IMR-90 (cell line): ENCODE measurements at regions of chr6 and their contacts with region 1.

Region 1: GRCh38 chr6:158518191-158519127 is 41.4 kb upstream of the TMEM181 start:
- DNase-seq: peak; percentile 69
- ATAC-seq: peak; percentile 96
- H3K4me3 ChIP-seq: peak overlapping the region; percentile 52
- H3K27ac ChIP-seq: no peak overlapping the region; the same call in 1 of the 2 replicates
- H3K4me1 ChIP-seq: no peaks in the 10 kb centered on the region
- H3K27me3 ChIP-seq: no peaks in the 10 kb centered on the region
- CTCF ChIP-seq: peak; percentile 59
- POLR2A ChIP-seq: no peak
- RAD21 ChIP-seq: peak; percentile 55

Region 2: DNA sequence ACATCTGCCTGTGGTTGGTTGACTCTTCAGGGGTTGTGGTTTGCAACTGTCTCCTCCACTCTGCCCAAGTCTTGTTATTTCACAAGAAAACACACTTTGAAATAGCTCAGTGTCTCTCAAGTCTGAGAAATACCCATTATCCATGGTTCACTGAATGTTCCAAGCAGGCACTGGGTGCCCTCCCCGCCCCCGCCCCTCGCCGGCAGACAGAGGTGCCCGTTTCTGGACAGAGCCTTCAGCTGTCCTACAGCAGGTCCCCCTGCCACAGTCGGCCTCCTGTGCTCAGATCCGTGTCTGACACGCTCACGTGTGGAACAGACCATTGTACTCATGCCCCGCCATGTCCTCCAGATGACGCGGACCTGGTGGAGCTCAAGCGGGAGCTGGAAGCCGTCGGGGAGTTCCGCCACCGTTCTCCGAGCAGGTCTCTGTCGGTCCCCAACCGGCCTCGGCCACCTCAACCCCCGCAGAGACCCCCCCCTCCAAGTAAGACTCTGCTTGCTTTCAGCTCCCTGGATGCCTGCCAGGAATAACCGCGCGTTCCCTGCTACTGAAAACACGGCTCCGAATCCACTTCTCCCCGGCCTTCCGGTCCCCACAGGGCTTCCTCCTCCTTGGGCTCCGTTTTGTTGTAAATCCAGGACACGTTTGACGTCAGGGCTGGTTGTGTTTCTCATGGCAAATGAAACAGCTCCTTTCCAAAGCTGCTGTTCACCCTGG is 431.8 kb before region 1 on chr6:
- CTCF ChIA-PET with region 1: no interaction called
- POLR2A ChIA-PET with region 1: no interaction called
- dilution Hi-C with region 1: no loop called
- in situ Hi-C with region 1: no loop called
- intact Hi-C with region 1: no loop called
- DNase-seq: peak; percentile 64
- ATAC-seq: peak; percentile 67; the same call in 1 of the 2 replicates
- H3K4me3 ChIP-seq: no peak overlapping the region
- H3K27ac ChIP-seq: no peak overlapping the region
- H3K4me1 ChIP-seq: peaks cover 8% of the 10 kb centered on the region
- H3K27me3 ChIP-seq: no peaks in the 10 kb centered on the region
- CTCF ChIP-seq: no peak
- POLR2A ChIP-seq: no peak
- RAD21 ChIP-seq: no peak

Region 3: GRCh38 chr6:158559895-158560835 is 41.7 kb after region 1 on chr6 and contains the start of gene TMEM181:
- CTCF ChIA-PET with region 1: no interaction called
- POLR2A ChIA-PET with region 1: no interaction called
- dilution Hi-C with region 1: no loop called
- in situ Hi-C with region 1: no loop called
- intact Hi-C with region 1: loop called (anchors 2 kb)
- DNase-seq: peak; percentile 80
- ATAC-seq: peak; percentile 74
- H3K4me3 ChIP-seq: peak within 1 kb of the TSS; percentile 76
- H3K27ac ChIP-seq: peak within 1 kb of the TSS; percentile 95
- H3K4me1 ChIP-seq: peaks cover 12% of the 10 kb centered on the region
- H3K27me3 ChIP-seq: no peaks in the 10 kb centered on the region
- CTCF ChIP-seq: no peak; the same call in 1 of the 2 replicates
- POLR2A ChIP-seq: peak; percentile 82
- RAD21 ChIP-seq: no peak; the same call in 1 of the 2 replicates
- total RNA-seq, gene TMEM181: 27.8 and 40.0 TPM in 2 replicates